SK-N-SH (cell line): ENCODE measurements at regions of chr19 and their contacts with region 1.

Region 1: DNA sequence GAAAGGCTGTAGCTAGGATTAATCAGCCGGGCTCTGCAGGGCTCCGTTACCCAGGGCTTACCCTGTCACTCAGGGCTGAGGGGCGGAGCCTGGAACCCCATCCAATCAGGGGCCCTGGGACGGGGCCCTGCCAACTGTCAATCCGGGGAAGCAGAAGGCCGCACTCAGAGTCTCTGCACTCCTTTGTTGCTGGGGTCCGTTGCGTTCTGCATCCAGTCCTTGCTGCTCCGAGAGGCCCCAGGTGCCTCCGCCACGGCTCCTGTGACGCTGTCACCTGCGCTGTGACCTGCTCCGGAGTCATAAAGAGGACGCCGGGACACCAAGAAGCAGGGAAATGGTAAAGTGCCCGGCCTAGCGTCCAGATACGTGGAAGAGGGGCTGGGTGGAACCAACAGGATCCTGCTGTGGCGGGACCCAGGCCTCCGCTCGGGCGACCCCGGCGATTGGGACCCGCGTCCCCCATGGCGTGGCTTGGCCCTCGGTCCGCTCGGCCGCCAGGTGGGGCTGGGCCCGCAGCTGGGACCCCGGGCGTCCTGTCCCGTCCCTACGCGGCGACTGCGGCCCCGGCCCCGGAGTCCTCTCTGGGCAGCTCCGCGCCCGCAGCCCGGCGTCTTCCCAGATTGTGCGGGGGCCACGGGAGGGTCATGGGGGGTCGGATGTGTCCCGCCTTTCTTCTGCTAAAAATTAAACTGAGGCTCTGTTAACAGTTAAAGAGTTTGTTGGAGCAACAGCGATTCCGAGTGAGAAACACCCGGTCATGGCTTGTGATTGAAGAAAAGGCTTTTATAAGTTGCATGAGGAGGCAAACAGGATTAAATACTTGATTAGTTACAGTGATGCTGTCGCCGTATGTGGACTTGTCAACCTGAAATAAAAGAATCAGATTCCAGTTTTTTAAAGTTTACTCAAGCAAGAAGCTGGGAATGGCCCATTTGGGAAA is at the start of gene ZNF491:
- DNase-seq: peak; percentile 98
- H3K4me3 ChIP-seq: peak within 1 kb of the TSS; percentile 73 to 76
- H3K27ac ChIP-seq: peak within 1 kb of the TSS; percentile 44 to 81; a peak in 3 of 4 replicates
- H3K4me1 ChIP-seq: peaks cover 0 to 7% of the 10 kb centered on the region in 2 experiments; a peak in 2 of 4 replicates
- H3K27me3 ChIP-seq: no peaks in the 10 kb centered on the region
- CTCF ChIP-seq: peak; percentile 41; the same call in 1 of the 2 replicates
- EP300 ChIP-seq: no peak
- RAD21 ChIP-seq: no peak; the same call in 1 of the 2 replicates
- polyA plus RNA-seq, gene ZNF491: 0.77 and 1.6 TPM in 2 replicates

Region 2: DNA sequence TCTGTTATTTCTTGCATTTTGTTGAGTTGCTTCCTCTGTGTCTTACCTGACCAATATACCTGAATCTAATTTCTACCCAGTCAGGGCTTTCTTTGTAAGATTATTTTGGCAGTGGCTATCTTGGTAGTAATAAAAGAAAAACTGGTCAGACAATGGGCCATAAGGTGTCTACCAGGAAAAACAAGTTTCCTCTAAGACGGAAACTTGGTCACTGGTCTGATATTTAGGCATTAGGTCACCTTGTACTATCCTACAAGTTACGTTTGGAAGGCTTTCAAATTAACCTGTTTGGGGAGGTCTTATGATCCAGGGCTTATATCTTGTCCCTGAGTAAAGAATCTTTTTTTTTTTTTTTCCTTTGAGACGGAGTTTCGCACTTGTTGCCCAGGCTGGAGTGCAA is 69.1 kb before region 1 on chr19:
- CTCF ChIA-PET with region 1: no interaction called
- POLR2A ChIA-PET with region 1: no interaction called
- DNase-seq: no peak
- H3K4me3 ChIP-seq: no peak overlapping the region
- H3K27ac ChIP-seq: no peak overlapping the region
- H3K4me1 ChIP-seq: no peaks in the 10 kb centered on the region
- H3K27me3 ChIP-seq: no peaks in the 10 kb centered on the region
- CTCF ChIP-seq: no peak
- EP300 ChIP-seq: no peak
- RAD21 ChIP-seq: no peak

Region 3: GRCh38 chr19:11756965-11757364 is 41.7 kb before region 1 on chr19:
- CTCF ChIA-PET with region 1: no interaction called
- POLR2A ChIA-PET with region 1: no interaction called
- DNase-seq: no peak
- H3K4me3 ChIP-seq: no peak overlapping the region
- H3K27ac ChIP-seq: no peak overlapping the region
- H3K4me1 ChIP-seq: no peaks in the 10 kb centered on the region
- H3K27me3 ChIP-seq: no peaks in the 10 kb centered on the region
- CTCF ChIP-seq: no peak
- EP300 ChIP-seq: no peak
- RAD21 ChIP-seq: no peak

Region 4: GRCh38 chr19:11780431-11781020 is 18.1 kb before region 1 on chr19:
- CTCF ChIA-PET with region 1: interaction called, 20 read pairs
- POLR2A ChIA-PET with region 1: no interaction called
- DNase-seq: no peak
- H3K4me3 ChIP-seq: no peak overlapping the region; a peak in 1 of 4 replicates
- H3K27ac ChIP-seq: no peak overlapping the region
- H3K4me1 ChIP-seq: no peaks in the 10 kb centered on the region
- H3K27me3 ChIP-seq: no peaks in the 10 kb centered on the region
- CTCF ChIP-seq: no peak
- EP300 ChIP-seq: no peak
- RAD21 ChIP-seq: no peak

Region 5: DNA sequence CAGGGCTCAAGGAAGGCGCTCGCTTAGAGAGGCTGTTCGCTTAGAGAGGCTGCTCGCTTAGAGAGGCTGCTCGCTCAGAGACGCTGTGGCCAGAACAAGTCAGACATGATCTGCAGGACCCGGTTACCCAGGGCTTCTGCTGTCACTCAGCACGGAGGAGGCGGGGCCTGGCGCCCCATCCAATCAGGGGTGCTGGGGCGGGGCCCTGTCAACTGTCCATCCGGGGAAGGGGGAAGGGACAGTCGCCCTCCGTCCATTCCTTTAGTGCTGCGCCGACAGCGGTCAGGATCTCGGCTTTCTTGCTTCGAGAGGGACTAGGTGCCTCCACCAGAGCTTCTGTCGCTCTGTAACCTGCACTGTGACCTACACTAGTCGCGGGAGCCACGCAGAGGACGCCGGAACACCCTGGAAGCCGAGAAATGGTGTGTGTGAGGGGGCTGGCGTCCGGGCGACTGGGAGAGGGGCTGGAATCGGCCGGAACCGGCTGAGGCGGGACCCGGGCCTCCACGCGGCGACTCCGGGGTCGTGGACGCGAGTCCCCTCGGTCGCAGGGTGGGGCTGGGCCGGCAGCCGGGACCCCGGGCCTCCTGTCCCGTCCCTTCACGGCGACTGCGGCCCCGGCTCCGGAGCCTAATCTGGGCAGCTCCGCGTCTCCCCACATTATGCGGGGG is 15.5 kb after region 1 on chr19 and contains the start of gene ZNF440:
- CTCF ChIA-PET with region 1: interaction called, 68 read pairs
- POLR2A ChIA-PET with region 1: no interaction called
- DNase-seq: peak; percentile 98
- H3K4me3 ChIP-seq: peak within 1 kb of the TSS; percentile 76 to 77
- H3K27ac ChIP-seq: peak within 1 kb of the TSS; percentile 60 to 85; a peak in 3 of 4 replicates
- H3K4me1 ChIP-seq: peaks cover 0 to 6% of the 10 kb centered on the region in 2 experiments; a peak in 1 of 4 replicates
- H3K27me3 ChIP-seq: no peaks in the 10 kb centered on the region
- CTCF ChIP-seq: no peak
- EP300 ChIP-seq: no peak
- RAD21 ChIP-seq: no peak
- polyA plus RNA-seq, gene ZNF440: 2.0 and 2.5 TPM in 2 replicates

Region 6: DNA sequence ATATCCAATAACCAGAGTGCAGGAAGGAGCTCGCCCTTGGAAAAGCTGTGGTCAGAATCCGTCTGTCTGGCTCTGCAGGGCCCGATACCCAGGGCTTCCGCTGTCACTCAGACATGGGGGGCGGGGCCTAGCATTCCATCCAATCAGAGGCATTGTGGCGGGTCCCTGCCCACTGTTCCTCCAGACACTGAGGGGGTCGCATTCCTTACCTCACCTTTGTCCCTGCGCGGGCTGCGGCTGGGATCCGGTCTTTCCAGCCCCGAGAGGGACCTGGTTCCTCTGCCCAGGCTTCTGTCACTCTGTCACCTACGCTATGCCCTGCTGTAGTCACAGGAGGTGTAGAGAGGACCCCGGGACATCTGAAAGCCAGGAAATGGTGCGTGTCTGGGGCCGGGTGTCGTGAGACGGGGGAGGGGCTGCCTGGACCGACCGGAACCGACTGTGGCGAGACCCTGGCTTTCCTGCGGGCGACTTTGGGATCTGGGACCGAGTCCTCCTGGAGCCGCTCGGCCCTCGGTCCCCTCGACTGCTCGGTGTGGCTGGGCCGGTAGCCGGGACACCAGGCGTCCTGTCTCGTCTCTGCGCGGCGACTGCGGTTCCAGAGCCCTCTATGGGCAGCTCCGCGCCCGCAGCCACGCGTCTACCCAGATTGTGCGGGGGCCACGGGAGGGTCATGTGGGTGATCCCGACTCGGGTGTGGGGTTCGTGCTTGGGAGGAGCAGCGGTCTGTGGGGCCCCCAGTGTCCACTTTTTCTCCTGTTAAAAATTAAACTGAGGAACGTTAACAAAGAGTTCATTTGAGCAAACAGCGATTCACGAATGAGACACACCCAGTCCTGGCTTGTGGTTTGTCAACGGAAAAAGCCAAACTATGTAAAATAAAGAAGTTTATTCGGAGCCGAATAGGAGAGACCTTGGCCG is 89.2 kb after region 1 on chr19 and contains the start of gene ZNF69:
- CTCF ChIA-PET with region 1: interaction called, 19 read pairs
- POLR2A ChIA-PET with region 1: no interaction called
- DNase-seq: peak; percentile 89
- H3K4me3 ChIP-seq: peak within 1 kb of the TSS; percentile 70 to 77
- H3K27ac ChIP-seq: peak within 1 kb of the TSS in 1 of 2 experiments; percentile 89; a peak in 2 of 4 replicates
- H3K4me1 ChIP-seq: peaks cover 0 to 3% of the 10 kb centered on the region in 2 experiments; a peak in 1 of 4 replicates
- H3K27me3 ChIP-seq: no peaks in the 10 kb centered on the region
- CTCF ChIP-seq: peak; percentile 25
- EP300 ChIP-seq: no peak
- RAD21 ChIP-seq: 0 out of 2 replicates have a peak, but pooled peaks have one; percentile 7
- polyA plus RNA-seq, gene ZNF69: 0.58 and 0.65 TPM in 2 replicates

Region 7: DNA sequence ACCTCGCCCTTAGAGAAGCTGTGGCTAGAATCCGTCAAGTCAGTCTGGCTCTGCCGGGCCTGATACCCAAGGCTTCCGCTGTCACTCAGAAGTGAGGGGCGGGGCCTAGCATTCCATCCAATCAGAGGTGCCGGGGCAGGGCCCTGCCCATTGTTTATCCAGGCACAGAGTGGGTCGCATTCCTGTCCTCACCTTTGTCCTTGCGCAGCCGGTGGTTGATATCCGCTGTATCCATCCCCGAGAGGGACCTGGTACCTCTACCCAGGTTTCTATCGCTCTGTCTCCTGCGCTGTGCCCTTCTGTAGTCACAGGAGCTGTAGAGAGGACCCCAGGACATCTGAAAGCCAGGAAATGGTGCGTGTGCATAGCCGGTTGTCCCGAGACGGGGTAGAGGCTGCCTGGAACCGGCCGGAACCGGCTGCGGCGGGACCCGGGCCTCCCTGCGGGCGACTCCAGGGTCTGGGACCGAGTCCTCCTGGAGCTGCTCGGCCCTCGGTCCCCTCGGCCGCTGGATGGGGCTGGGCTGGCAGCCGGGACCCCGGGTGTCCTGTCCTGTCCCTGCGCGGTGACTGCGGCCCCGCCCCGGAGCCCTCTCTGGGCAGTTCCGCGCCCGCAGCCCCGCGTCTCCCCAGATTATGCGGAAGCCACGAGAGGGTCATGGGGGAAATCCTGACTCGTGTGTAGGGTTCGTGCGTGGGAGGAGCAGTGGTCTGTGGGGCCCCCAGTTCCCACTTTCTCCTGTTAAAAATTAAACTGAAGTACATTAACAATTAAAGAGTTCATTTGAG is 166.4 kb after region 1 on chr19 and contains the start of gene ZNF763:
- CTCF ChIA-PET with region 1: interaction called, 21 read pairs
- POLR2A ChIA-PET with region 1: interaction called, 6 read pairs
- DNase-seq: peak; percentile 92
- H3K4me3 ChIP-seq: peak within 1 kb of the TSS; percentile 65
- H3K27ac ChIP-seq: peak within 1 kb of the TSS; percentile 30 to 72
- H3K4me1 ChIP-seq: peaks cover 0 to 7% of the 10 kb centered on the region in 2 experiments; a peak in 1 of 4 replicates
- H3K27me3 ChIP-seq: no peaks in the 10 kb centered on the region
- CTCF ChIP-seq: no peak
- EP300 ChIP-seq: no peak
- RAD21 ChIP-seq: no peak
- polyA plus RNA-seq, gene ZNF763: 0.55 and 0.72 TPM in 2 replicates